CD8-positive, alpha-beta T cell (primary cell): ENCODE measurements at regions of chr9 and their contacts with region 1.

Region 1: DNA sequence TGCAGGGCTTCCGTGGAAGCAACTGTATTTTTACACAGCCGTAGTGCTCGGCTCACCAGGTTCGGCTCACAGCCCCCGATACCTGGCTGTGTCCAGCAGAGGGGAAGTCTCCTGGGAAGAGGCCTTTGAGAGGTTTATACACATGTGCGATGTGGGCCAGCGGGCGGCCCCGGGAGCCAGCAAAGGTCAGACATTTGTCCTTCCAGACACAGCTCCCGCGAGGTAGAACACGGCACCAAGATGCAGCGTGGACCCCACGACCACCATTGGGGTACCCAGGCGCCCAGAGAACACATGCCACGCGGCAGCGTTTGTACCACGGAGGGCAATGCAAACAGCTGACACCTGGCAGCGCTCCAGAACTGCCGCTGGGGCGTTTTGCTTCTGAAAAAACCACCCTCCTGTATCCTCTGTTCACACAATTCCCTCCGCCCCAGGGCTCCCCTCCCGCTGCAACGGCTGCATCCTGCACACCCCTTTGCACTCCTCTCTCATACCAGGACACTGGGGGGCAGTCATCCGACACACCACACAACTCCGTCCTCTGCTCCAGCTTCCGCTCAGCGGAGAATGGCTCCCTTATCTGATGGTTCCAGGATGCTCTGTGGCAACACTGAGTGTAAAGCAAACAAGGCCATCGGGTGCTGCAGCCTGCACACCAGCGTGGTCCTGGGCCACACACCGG is 235.3 kb downstream of the SYK start:
- DNase-seq: peak; percentile 24 to 79 (median 59)
- ATAC-seq: peak; percentile 85
- H3K4me3 ChIP-seq: no peak overlapping the region
- H3K4me3 Mint-ChIP-seq: peak overlapping the region; percentile 35
- H3K27ac ChIP-seq: no peak overlapping the region
- H3K27ac Mint-ChIP-seq: no peak overlapping the region
- H3K4me1 ChIP-seq: peaks cover 11% of the 10 kb centered on the region
- H3K4me1 Mint-ChIP-seq: peaks cover 11% of the 10 kb centered on the region
- H3K27me3 ChIP-seq: no peaks in the 10 kb centered on the region
- H3K27me3 Mint-ChIP-seq: peaks cover 24% of the 10 kb centered on the region
- CTCF ChIP-seq: peak; percentile 43

Region 2: DNA sequence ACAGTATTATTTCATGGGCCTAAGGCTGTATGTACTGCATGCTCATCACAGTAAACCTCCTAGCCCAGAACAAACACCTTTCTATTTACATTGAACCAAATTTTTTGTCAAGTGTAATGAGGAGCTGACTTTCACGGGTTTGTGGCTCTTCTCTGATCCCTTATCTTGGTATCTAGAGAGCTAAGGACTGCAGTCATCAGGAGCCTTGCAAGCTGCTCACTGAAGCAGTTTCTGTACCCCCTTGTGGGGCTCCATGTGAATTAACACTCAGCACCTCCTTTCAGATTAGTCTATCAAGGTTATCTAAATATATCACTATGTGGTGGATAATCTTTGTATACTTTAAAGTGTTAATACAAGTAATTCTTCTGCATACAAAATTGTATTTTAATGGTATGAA is 216.5 kb after region 1 on chr9:
- CTCF ChIA-PET with region 1: interaction called, 9 read pairs
- POLR2A ChIA-PET with region 1: no interaction called
- intact Hi-C with region 1: loop called in 1 of 2 experiments (anchors 5 kb)
- DNase-seq: peak in 4 of 9 experiments; percentile 7 to 78 (median 41)
- ATAC-seq: peak; percentile 80
- H3K4me3 ChIP-seq: no peak overlapping the region
- H3K4me3 Mint-ChIP-seq: no peak overlapping the region
- H3K27ac ChIP-seq: no peak overlapping the region
- H3K27ac Mint-ChIP-seq: no peak overlapping the region
- H3K4me1 ChIP-seq: no peaks in the 10 kb centered on the region
- H3K4me1 Mint-ChIP-seq: peaks cover 19% of the 10 kb centered on the region
- H3K27me3 ChIP-seq: no peaks in the 10 kb centered on the region
- H3K27me3 Mint-ChIP-seq: no peaks in the 10 kb centered on the region
- CTCF ChIP-seq: no peak

Region 3: DNA sequence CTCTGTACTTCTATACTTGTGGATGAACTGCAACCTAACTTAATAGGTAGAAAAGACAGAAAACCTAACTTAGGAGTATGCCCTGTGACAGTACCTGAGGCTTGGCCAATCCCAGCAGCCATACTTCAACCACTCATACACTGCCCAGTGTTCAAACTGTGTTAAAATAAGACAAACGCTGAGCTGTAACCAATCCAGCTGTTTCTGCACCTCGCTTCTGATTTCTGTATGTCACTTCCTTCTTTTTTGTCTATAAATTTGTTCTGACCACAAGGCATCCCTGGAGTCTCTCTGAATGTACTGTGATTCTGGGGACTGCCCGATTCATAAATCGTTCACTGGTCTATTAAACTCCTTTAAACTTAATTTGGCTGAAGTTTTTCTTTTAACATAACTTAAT is 283.3 kb after region 1 on chr9:
- CTCF ChIA-PET with region 1: interaction called, 4 read pairs
- POLR2A ChIA-PET with region 1: no interaction called
- intact Hi-C with region 1: loop called in 1 of 2 experiments (anchors 10 kb)
- DNase-seq: no peak
- ATAC-seq: no peak
- H3K4me3 ChIP-seq: no peak overlapping the region
- H3K4me3 Mint-ChIP-seq: no peak overlapping the region
- H3K27ac ChIP-seq: no peak overlapping the region
- H3K27ac Mint-ChIP-seq: no peak overlapping the region
- H3K4me1 ChIP-seq: no peaks in the 10 kb centered on the region
- H3K4me1 Mint-ChIP-seq: peaks cover 2% of the 10 kb centered on the region
- H3K27me3 ChIP-seq: no peaks in the 10 kb centered on the region
- H3K27me3 Mint-ChIP-seq: no peaks in the 10 kb centered on the region
- CTCF ChIP-seq: no peak

Region 4: DNA sequence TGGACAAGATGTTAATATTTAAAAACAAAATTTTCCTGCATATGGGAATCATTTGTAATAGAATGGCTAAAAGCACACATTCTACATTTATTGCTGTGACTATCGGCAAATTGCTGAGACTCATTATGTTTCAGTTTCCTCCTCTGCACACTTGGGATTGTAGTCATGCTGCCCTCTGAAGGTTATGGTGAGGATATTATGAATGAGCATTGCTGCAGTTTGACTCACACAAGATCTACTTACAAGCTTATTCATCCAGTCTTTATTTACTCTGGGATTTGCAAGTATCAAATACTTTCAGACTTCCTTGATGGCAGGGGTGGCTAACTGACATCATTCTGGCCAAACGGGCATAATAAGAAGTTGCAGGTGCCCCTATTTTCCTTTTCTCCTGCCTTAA is 396.2 kb after region 1 on chr9:
- CTCF ChIA-PET with region 1: interaction called, 10 read pairs
- POLR2A ChIA-PET with region 1: no interaction called
- intact Hi-C with region 1: loop called in 1 of 2 experiments (anchors 1 kb)
- DNase-seq: peak in 2 of 9 experiments; percentile 54 to 64
- ATAC-seq: peak; percentile 36
- H3K4me3 ChIP-seq: no peak overlapping the region
- H3K4me3 Mint-ChIP-seq: no peak overlapping the region
- H3K27ac ChIP-seq: no peak overlapping the region
- H3K27ac Mint-ChIP-seq: no peak overlapping the region
- H3K4me1 ChIP-seq: no peaks in the 10 kb centered on the region
- H3K4me1 Mint-ChIP-seq: peaks cover 2% of the 10 kb centered on the region
- H3K27me3 ChIP-seq: no peaks in the 10 kb centered on the region
- H3K27me3 Mint-ChIP-seq: peaks cover 2% of the 10 kb centered on the region
- CTCF ChIP-seq: peak; percentile 25

Region 5: DNA sequence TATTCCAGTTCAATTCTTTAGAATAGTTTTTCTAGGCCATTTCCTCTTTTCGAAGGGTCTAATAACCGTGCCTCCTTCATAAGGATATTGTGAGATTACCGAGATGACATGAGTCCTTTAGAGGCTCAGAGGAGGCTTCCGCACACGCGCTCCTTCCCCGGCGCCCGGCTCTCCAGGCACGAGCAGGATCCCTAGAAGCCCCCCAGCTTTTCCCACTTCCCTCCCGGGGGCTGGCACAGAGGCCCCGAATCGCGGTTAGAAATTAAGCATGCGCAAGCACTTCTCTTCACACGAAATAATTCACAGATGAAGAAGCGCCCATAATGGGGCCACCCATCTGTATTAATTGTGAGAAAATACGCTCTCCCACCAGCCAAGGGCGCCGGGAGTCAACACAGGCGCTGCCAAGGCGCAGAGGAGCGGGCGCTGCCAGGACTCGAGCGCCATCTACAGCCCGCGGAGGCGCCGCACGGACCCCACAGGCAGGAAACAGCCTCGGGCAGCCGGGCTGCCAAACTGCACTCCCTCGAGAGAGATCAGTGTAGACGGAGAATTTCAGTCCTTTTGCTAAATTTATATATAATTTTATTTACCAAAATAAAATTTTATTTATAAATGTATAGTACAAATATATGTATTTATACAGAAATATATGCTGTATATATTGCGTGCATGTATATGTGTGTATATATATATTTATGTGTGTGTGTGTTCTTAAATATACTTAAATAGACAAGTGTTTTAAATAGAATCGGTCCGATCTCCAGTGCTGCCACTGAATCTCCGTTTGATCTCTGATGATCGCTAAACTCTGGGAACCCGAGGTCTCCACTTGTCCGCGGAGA is 644.7 kb after region 1 on chr9:
- CTCF ChIA-PET with region 1: no interaction called
- POLR2A ChIA-PET with region 1: no interaction called
- intact Hi-C with region 1: loop called in 1 of 2 experiments (anchors 5 kb)
- DNase-seq: peak; percentile 44 to 74 (median 59)
- ATAC-seq: peak; percentile 80
- H3K4me3 ChIP-seq: no peak overlapping the region
- H3K4me3 Mint-ChIP-seq: peak overlapping the region; percentile 26
- H3K27ac ChIP-seq: no peak overlapping the region
- H3K27ac Mint-ChIP-seq: no peak overlapping the region
- H3K4me1 ChIP-seq: peaks cover 5% of the 10 kb centered on the region
- H3K4me1 Mint-ChIP-seq: peaks cover 1% of the 10 kb centered on the region
- H3K27me3 ChIP-seq: peaks cover 3 to 4% of the 10 kb centered on the region in 2 experiments
- H3K27me3 Mint-ChIP-seq: peaks cover 42% of the 10 kb centered on the region
- CTCF ChIP-seq: peak; percentile 81

Region 6: GRCh38 chr9:91727316-91727861 is 690.4 kb after region 1 on chr9:
- CTCF ChIA-PET with region 1: interaction called, 3 read pairs
- POLR2A ChIA-PET with region 1: no interaction called
- intact Hi-C with region 1: loop called in 1 of 2 experiments (anchors 2 kb)
- DNase-seq: peak in 3 of 9 experiments; percentile 17 to 57 (median 52)
- ATAC-seq: peak; percentile 55
- H3K4me3 ChIP-seq: no peak overlapping the region
- H3K4me3 Mint-ChIP-seq: no peak overlapping the region
- H3K27ac ChIP-seq: no peak overlapping the region
- H3K27ac Mint-ChIP-seq: no peak overlapping the region
- H3K4me1 ChIP-seq: no peaks in the 10 kb centered on the region
- H3K4me1 Mint-ChIP-seq: no peaks in the 10 kb centered on the region
- H3K27me3 ChIP-seq: no peaks in the 10 kb centered on the region
- H3K27me3 Mint-ChIP-seq: peaks cover 7% of the 10 kb centered on the region
- CTCF ChIP-seq: peak; percentile 55